CD8-positive, alpha-beta memory T cell (primary cell): ENCODE measurements at regions of chr6 and their contacts with region 1.

Region 1: DNA sequence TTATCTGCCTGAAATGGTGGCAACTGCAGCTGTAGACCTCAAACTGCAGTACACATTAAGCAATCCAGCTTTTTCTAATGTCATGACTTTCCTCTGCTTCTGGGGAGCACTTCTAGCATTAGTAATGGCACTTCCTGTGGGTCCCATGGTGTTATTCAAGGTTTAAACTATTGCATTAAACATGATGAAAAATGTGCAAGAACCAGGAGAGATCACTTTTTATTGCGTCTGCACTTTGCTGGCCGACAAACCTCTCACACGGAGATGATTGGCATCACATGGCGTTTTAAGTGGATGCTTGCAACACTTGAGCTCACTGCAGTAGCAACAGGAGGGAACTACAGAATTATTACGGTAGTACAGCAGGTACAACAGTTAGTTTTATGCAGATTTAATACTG is 148.4 kb downstream of the HIVEP2 start:
- DNase-seq: no peak
- H3K4me3 ChIP-seq: no peak overlapping the region
- H3K4me3 Mint-ChIP-seq: no peak overlapping the region
- H3K27ac ChIP-seq: no peak overlapping the region
- H3K27ac Mint-ChIP-seq: peak overlapping the region in 1 of 8 donors; percentile 13
- H3K4me1 ChIP-seq: peaks cover 21% of the 10 kb centered on the region
- H3K4me1 Mint-ChIP-seq: peaks cover 56 to 89% (median 85%) of the 10 kb centered on the region in 3 donors
- H3K27me3 ChIP-seq: no peaks in the 10 kb centered on the region
- H3K27me3 Mint-ChIP-seq: no peaks in the 10 kb centered on the region

Region 2: GRCh38 chr6:142810952-142811514 is 14.5 kb after region 1 on chr6:
- CTCF ChIA-PET with region 1: no interaction called
- POLR2A ChIA-PET with region 1: interaction called, 13 read pairs
- DNase-seq: no peak
- H3K4me3 ChIP-seq: no peak overlapping the region
- H3K4me3 Mint-ChIP-seq: peak overlapping the region in 3 of 7 donors; percentile 2 to 21 (median 7)
- H3K27ac ChIP-seq: no peak overlapping the region
- H3K27ac Mint-ChIP-seq: peak overlapping the region in 7 of 8 donors; percentile 33 to 79 (median 52)
- H3K4me1 ChIP-seq: peaks cover 32% of the 10 kb centered on the region
- H3K4me1 Mint-ChIP-seq: peaks cover 65 to 94% (median 88%) of the 10 kb centered on the region in 3 donors
- H3K27me3 ChIP-seq: no peaks in the 10 kb centered on the region
- H3K27me3 Mint-ChIP-seq: no peaks in the 10 kb centered on the region

Region 3: GRCh38 chr6:142902636-142903053 is 106.1 kb after region 1 on chr6:
- CTCF ChIA-PET with region 1: no interaction called
- POLR2A ChIA-PET with region 1: interaction called, 12 read pairs
- DNase-seq: peak; percentile 65 to 91 (median 85)
- H3K4me3 ChIP-seq: peak overlapping the region; percentile 21
- H3K4me3 Mint-ChIP-seq: peak overlapping the region; percentile 38 to 83 (median 80)
- H3K27ac ChIP-seq: peak overlapping the region; percentile 62
- H3K27ac Mint-ChIP-seq: peak overlapping the region; percentile 92 to 99 (median 96)
- H3K4me1 ChIP-seq: peaks cover 72% of the 10 kb centered on the region
- H3K4me1 Mint-ChIP-seq: peaks cover 13 to 67% (median 13%) of the 10 kb centered on the region in 3 donors
- H3K27me3 ChIP-seq: no peaks in the 10 kb centered on the region
- H3K27me3 Mint-ChIP-seq: no peaks in the 10 kb centered on the region